Activated CD8-positive, alpha-beta memory T cell treated with anti-CD3 and anti-CD28 coated beads, Interleukin-2, amount 10 ng/mL, durations not matched to agents 7 days and 5 days (primary cell): ENCODE measurements at regions of chr17 and their contacts with region 1.

Region 1: GRCh38 chr17:72725433-72726068 is 366.9 kb downstream of the SLC39A11 start:
- DNase-seq: peak; percentile 69
- ATAC-seq: peak; percentile 32
- H3K4me3 Mint-ChIP-seq: no peak overlapping the region
- H3K27ac Mint-ChIP-seq: peak overlapping the region; percentile 58
- H3K4me1 Mint-ChIP-seq: peaks cover 48% of the 10 kb centered on the region
- H3K27me3 Mint-ChIP-seq: no peaks in the 10 kb centered on the region

Region 2: GRCh38 chr17:72556944-72557826 is 168.4 kb before region 1 on chr17:
- CTCF ChIA-PET with region 1: interaction called, 189 read pairs
- DNase-seq: peak; percentile 76
- ATAC-seq: peak; percentile 72
- H3K4me3 Mint-ChIP-seq: no peak overlapping the region
- H3K27ac Mint-ChIP-seq: no peak overlapping the region
- H3K4me1 Mint-ChIP-seq: no peaks in the 10 kb centered on the region
- H3K27me3 Mint-ChIP-seq: no peaks in the 10 kb centered on the region

Region 3: GRCh38 chr17:72699545-72699944 is 26.0 kb before region 1 on chr17:
- CTCF ChIA-PET with region 1: interaction called, 29 read pairs
- DNase-seq: no peak
- ATAC-seq: no peak
- H3K4me3 Mint-ChIP-seq: no peak overlapping the region
- H3K27ac Mint-ChIP-seq: no peak overlapping the region
- H3K4me1 Mint-ChIP-seq: peaks cover 10% of the 10 kb centered on the region
- H3K27me3 Mint-ChIP-seq: no peaks in the 10 kb centered on the region

Region 4: GRCh38 chr17:72985881-72986720 is 260.6 kb after region 1 on chr17:
- CTCF ChIA-PET with region 1: interaction called, 36 read pairs
- DNase-seq: peak; percentile 67
- ATAC-seq: peak; percentile 71
- H3K4me3 Mint-ChIP-seq: no peak overlapping the region
- H3K27ac Mint-ChIP-seq: no peak overlapping the region
- H3K4me1 Mint-ChIP-seq: peaks cover 7% of the 10 kb centered on the region
- H3K27me3 Mint-ChIP-seq: no peaks in the 10 kb centered on the region

Region 5: DNA sequence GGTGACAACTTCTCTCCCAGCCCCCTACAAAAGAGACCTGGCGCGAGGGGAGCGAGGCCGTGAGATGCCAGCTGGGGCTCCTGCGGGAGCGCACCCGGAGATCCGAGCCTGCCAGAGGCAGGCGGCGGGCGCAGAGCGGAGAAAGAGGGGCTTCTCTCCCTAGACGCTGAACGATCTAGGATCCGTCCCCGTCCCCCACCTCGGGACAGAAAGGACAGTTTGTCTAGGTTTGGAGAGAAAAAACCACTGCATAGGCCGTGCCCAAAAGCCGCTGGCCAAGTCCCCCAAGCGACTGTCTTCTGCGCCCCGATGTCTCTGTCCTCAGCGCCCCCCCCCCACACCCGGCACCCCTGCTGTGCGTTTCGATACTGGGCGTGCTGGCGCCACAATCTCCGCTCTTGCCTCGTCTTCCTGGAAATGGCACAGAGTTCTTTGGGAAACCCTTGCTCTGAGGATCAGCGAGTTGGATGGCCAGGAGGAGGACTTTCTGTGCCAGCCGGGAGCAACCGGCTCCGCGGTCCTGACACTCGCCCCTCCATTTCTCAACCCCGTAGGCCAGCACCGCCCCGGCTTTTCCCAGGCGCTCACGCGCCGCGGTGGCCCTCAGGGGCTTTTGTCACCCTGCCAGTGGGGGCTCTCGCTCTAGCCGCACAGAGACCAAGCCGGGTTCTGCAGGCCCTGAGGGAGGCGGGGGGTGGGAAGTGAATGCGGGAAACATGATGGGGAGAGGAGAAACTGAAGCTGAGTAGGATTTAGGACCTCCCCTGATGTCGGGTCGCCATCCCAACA is 440.3 kb after region 1 on chr17:
- CTCF ChIA-PET with region 1: interaction called, 11 read pairs
- DNase-seq: no peak
- ATAC-seq: no peak
- H3K4me3 Mint-ChIP-seq: peak overlapping the region; percentile 54
- H3K27ac Mint-ChIP-seq: no peak overlapping the region
- H3K4me1 Mint-ChIP-seq: peaks cover 35% of the 10 kb centered on the region
- H3K27me3 Mint-ChIP-seq: peaks cover 80% of the 10 kb centered on the region

Region 6: GRCh38 chr17:73231841-73232586 is 506.5 kb after region 1 on chr17:
- CTCF ChIA-PET with region 1: interaction called, 25 read pairs
- DNase-seq: peak; percentile 96
- ATAC-seq: peak; percentile 91
- H3K4me3 Mint-ChIP-seq: peak overlapping the region; percentile 85
- H3K27ac Mint-ChIP-seq: peak overlapping the region; percentile 89
- H3K4me1 Mint-ChIP-seq: peaks cover 56% of the 10 kb centered on the region
- H3K27me3 Mint-ChIP-seq: no peaks in the 10 kb centered on the region

Region 7: DNA sequence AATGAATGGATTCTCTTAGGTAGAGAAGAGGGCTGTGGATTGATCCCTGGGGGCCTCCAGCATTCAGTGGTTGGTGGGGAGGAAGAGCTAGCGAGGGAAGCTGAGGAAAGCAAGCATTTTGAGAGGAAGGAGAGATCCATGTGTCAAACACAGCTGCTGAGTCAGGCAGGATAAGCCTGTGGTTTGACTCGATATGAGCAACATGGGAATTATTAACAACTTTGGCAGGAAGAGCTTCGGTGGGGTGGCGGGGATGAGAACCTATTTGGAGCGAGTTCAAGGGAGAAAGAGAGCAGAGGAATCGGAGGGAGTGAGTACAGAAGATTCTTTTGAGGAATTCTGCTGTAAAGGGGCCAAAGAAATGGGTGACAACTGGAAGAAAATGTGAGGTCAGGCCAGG is 645.7 kb after region 1 on chr17:
- CTCF ChIA-PET with region 1: interaction called, 96 read pairs
- DNase-seq: no peak
- ATAC-seq: no peak
- H3K4me3 Mint-ChIP-seq: no peak overlapping the region
- H3K27ac Mint-ChIP-seq: no peak overlapping the region
- H3K4me1 Mint-ChIP-seq: no peaks in the 10 kb centered on the region
- H3K27me3 Mint-ChIP-seq: peaks cover 21% of the 10 kb centered on the region